Activated T-helper 1 cell treated with anti-CD3 and anti-CD28 coated beads, Interleukin-12 subunit alpha, Interleukin-12 subunit beta, Interleukin-2, Interleukin-4 antibody, amounts not matched to agents 30 ng/mL and 10 ng/mL and 1 ng/mL, durations not matched to agents 14 hours and 24 hours and 36 hours (primary cell): ENCODE measurements at regions of chr2 and their contacts with region 1.

Region 1: GRCh38 chr2:70190418-70191243 is at the start of gene C2orf42:
- DNase-seq: peak; percentile 95
- H3K4me3 Mint-ChIP-seq: peak within 1 kb of the TSS; percentile 95
- H3K27ac Mint-ChIP-seq: peak within 1 kb of the TSS; percentile 99
- H3K4me1 Mint-ChIP-seq: peaks cover 23% of the 10 kb centered on the region
- H3K27me3 Mint-ChIP-seq: peaks cover 3% of the 10 kb centered on the region
- total RNA-seq, gene C2orf42: 21.6 and 24.1 TPM in 2 replicates

Region 2: DNA sequence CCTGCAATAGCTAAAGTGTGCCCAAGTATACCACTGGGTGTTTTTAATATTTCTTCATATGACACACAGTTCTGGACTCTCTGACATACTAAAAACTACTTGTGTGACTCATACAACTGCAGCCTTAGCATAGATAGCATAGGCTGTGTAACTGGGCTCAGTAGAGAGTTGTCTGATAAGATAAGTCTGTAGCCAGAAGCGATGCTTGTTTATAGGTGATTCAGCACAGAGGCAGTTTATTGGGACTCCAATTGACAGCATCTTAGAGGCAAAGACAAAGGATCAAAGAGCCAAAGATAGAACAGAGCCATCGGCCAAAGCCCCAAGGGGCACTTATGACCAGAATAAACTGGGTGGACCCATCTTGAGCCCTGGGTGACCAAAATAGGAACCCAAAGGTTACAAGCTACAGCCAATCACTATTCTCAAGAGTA is 589.4 kb before region 1 on chr2:
- intact Hi-C with region 1: loop called (anchors 1 kb)
- DNase-seq: no peak
- H3K4me3 Mint-ChIP-seq: no peak overlapping the region
- H3K27ac Mint-ChIP-seq: peak overlapping the region; percentile 42
- H3K4me1 Mint-ChIP-seq: peaks cover 76% of the 10 kb centered on the region
- H3K27me3 Mint-ChIP-seq: no peaks in the 10 kb centered on the region

Region 3: DNA sequence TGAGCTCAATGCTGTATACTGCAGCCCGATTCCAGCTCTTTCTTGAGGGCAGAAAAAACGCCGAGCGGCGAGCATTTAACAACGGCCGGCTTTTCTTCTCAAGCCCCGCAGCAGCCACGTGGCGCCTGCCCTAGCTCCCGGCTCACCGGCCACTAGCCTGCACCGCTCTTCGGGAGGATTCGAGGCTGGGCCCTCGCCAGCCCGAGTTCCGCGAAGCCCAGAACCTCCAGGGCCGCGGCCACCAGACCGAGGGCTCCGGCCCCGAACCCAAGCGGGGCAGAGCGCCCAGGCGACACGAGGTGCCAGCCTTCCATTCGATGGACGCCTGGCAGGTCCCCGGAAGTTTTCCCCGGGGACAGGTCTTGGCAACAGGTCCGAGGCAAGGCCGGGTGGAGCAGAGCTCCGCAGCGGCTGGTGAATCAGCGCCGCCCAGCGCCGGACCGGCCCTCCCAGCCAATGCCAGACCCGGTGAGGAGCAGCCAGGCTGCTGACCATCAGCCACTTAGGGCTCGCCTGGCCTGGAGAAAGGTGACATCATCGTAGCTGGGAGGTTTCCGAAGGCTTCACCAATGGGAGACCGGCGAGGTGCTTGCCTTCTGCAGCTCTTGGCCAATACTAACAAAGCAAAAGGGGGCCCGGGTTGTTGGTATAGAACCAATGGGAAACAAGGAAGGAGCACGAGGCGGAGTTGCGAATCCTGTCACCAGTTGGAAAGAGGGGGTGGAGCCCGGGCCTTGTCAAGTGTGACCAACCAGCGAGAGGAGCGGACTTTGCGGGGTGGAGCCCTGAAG is 276.3 kb before region 1 on chr2:
- intact Hi-C with region 1: loop called (anchors 1 kb)
- DNase-seq: peak; percentile 100
- H3K4me3 Mint-ChIP-seq: peak overlapping the region; percentile 78
- H3K27ac Mint-ChIP-seq: peak overlapping the region; percentile 90
- H3K4me1 Mint-ChIP-seq: peaks cover 42% of the 10 kb centered on the region
- H3K27me3 Mint-ChIP-seq: no peaks in the 10 kb centered on the region

Region 4: GRCh38 chr2:70069049-70069448 is 121.6 kb before region 1 on chr2:
- intact Hi-C with region 1: loop called (anchors 1 kb)
- DNase-seq: peak; percentile 81
- H3K4me3 Mint-ChIP-seq: peak overlapping the region; percentile 68
- H3K27ac Mint-ChIP-seq: peak overlapping the region; percentile 83
- H3K4me1 Mint-ChIP-seq: peaks cover 47% of the 10 kb centered on the region
- H3K27me3 Mint-ChIP-seq: no peaks in the 10 kb centered on the region

Region 5: GRCh38 chr2:70124983-70125480 is 65.6 kb before region 1 on chr2:
- intact Hi-C with region 1: loop called (anchors 1 kb)
- DNase-seq: peak; percentile 42
- H3K4me3 Mint-ChIP-seq: peak overlapping the region; percentile 93
- H3K27ac Mint-ChIP-seq: peak overlapping the region; percentile 99
- H3K4me1 Mint-ChIP-seq: peaks cover 78% of the 10 kb centered on the region
- H3K27me3 Mint-ChIP-seq: no peaks in the 10 kb centered on the region

Region 6: GRCh38 chr2:70248181-70248847 is 57.7 kb after region 1 on chr2 and contains the start of gene TIA1:
- intact Hi-C with region 1: loop called (anchors 1 kb)
- DNase-seq: peak; percentile 98
- H3K4me3 Mint-ChIP-seq: peak within 1 kb of the TSS; percentile 99
- H3K27ac Mint-ChIP-seq: peak within 1 kb of the TSS; percentile 99
- H3K4me1 Mint-ChIP-seq: peaks cover 42% of the 10 kb centered on the region
- H3K27me3 Mint-ChIP-seq: no peaks in the 10 kb centered on the region
- total RNA-seq, gene TIA1: 96.8 and 101 TPM in 2 replicates